Psoas muscle (tissue), 8 donors: ENCODE measurements at regions of chr15 and their contacts with region 1.

Region 1: GRCh38 chr15:70097337-70098169 is at the start of gene TLE3:
- DNase-seq: peak; percentile 98 to 99
- ATAC-seq: peak; percentile 57 to 68 (median 62)
- H3K4me3 ChIP-seq: peak within 1 kb of the TSS; percentile 95
- H3K27ac ChIP-seq: peak within 1 kb of the TSS; percentile 97
- H3K4me1 ChIP-seq: peaks cover 60% of the 10 kb centered on the region
- H3K27me3 ChIP-seq: no peaks in the 10 kb centered on the region
- CTCF ChIP-seq: peak; percentile 42
- total RNA-seq, gene TLE3: 10.8 to 59.9 (median 18.6) TPM

Region 2: GRCh38 chr15:69576035-69576526 is 521.5 kb before region 1 on chr15:
- intact Hi-C with region 1: loop called in 1 of 2 experiments (anchors 2 kb)
- DNase-seq: peak; percentile 61 to 78
- ATAC-seq: peak; percentile 87 to 93 (median 92)
- H3K4me3 ChIP-seq: no peak overlapping the region
- H3K27ac ChIP-seq: no peak overlapping the region
- H3K4me1 ChIP-seq: no peaks in the 10 kb centered on the region
- H3K27me3 ChIP-seq: peaks cover 0 to 3% (median 0%) of the 10 kb centered on the region in 3 donors
- CTCF ChIP-seq: peak; percentile 75

Region 3: DNA sequence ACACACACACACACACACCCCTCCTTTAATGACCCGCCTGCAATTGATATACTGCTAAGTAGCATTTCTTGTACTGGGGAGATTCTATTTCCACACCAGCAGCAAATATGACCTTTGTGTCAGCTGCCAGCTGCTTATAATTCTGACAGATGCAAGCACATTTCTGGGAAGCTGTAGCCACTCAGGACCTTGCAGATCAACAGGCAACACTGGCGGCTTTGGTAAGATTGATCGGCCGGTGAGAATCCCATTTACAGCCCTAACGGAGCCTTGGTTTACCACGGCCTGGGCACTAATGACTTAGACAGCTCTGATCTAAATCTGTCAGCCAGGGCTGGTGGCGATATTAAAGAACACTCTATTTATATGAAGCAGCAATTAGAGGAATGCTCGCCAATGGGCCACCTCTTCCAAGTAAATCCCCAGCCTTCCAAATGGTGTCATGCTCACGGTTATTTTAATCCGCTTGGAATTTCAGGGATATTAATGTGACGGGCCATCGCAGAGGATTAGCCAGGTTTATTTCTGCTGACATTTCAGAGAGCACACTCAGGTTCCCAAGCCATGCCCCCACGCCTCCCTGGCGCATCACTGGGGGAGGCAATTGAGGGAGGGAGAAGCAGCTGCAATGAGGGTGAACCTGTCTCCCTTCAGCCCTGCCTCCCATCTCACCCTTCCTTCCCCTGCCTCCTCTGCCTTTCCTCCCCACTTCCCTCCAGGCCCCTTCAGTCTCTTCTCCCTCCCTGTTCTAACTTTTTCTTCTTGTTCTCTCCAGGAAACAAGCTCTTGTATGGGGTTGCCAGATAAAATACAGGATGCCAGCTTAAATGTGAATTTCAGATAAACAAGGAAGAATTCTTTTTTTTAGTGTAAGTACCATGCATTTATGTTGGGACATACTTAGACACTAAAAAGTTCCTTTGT is 286.9 kb before region 1 on chr15:
- intact Hi-C with region 1: loop called in 1 of 2 experiments (anchors 5 kb)
- DNase-seq: peak; percentile 40 to 67
- ATAC-seq: peak; percentile 81 to 87 (median 86)
- H3K4me3 ChIP-seq: no peak overlapping the region
- H3K27ac ChIP-seq: peak overlapping the region; percentile 77
- H3K4me1 ChIP-seq: peaks cover 11% of the 10 kb centered on the region
- H3K27me3 ChIP-seq: peaks cover 0 to 5% (median 0%) of the 10 kb centered on the region in 3 donors
- CTCF ChIP-seq: no peak

Region 4: DNA sequence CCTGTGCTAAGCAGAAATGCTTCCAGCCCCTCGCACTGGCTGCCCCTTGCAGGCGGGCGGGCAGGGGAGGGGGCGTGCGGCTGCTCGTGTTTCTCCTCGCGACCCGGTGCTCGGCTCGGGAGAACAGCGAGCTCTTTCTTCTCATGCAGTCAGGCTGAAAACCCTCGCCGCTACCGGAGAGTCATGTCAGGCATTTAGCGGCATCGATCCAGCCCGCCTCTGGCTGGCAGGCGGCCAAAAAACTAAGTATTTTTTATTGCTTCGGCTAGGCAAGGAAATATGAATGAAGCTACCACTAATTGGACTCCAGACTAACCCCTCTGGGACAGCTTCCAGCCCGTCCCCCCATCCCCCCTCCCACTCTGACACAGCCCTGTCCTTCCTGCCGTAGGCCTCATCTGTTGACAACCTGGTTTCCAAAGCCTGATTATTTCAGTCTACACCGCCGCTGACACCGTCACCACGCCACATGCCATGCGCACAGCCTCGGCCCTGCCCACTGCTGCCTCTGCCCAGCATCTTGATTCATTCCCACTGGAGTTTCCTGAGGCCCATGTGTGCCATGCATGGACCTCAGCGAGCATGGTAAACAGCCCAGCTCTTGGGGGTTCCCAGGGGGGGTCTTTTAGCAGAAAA is 35.1 kb before region 1 on chr15:
- intact Hi-C with region 1: loop called in 1 of 2 experiments (anchors 5 kb)
- DNase-seq: peak; percentile 59 to 77
- ATAC-seq: peak; percentile 81 to 94 (median 90)
- H3K4me3 ChIP-seq: peak overlapping the region; percentile 43
- H3K27ac ChIP-seq: peak overlapping the region; percentile 51
- H3K4me1 ChIP-seq: peaks cover 19% of the 10 kb centered on the region
- H3K27me3 ChIP-seq: no peaks in the 10 kb centered on the region
- CTCF ChIP-seq: no peak

Region 5: GRCh38 chr15:70196314-70197291 is 99.0 kb after region 1 on chr15:
- intact Hi-C with region 1: loop called (anchors 2 to 5 kb)
- DNase-seq: peak; percentile 86 to 94
- ATAC-seq: peak; percentile 83 to 88 (median 86)
- H3K4me3 ChIP-seq: peak overlapping the region; percentile 12
- H3K27ac ChIP-seq: peak overlapping the region; percentile 93
- H3K4me1 ChIP-seq: peaks cover 41% of the 10 kb centered on the region
- H3K27me3 ChIP-seq: no peaks in the 10 kb centered on the region
- CTCF ChIP-seq: no peak

Region 6: GRCh38 chr15:70474471-70475396 is 377.2 kb after region 1 on chr15:
- intact Hi-C with region 1: loop called in 1 of 2 experiments (anchors 5 kb)
- DNase-seq: peak; percentile 88
- ATAC-seq: peak; percentile 87 to 90 (median 89)
- H3K4me3 ChIP-seq: peak overlapping the region; percentile 46
- H3K27ac ChIP-seq: peak overlapping the region; percentile 81
- H3K4me1 ChIP-seq: peaks cover 23% of the 10 kb centered on the region
- H3K27me3 ChIP-seq: no peaks in the 10 kb centered on the region
- CTCF ChIP-seq: no peak

Region 7: GRCh38 chr15:70569091-70569621 is 471.6 kb after region 1 on chr15:
- intact Hi-C with region 1: no loop called
- DNase-seq: no peak
- ATAC-seq: peak in 3 of 4 donors; percentile 50 to 71 (median 51)
- H3K4me3 ChIP-seq: no peak overlapping the region
- H3K27ac ChIP-seq: no peak overlapping the region
- H3K4me1 ChIP-seq: peaks cover 7% of the 10 kb centered on the region
- H3K27me3 ChIP-seq: no peaks in the 10 kb centered on the region
- CTCF ChIP-seq: peak; percentile 32